ENCODE measurements at regions of chr19 and their contacts with region 1.

Region 1: DNA sequence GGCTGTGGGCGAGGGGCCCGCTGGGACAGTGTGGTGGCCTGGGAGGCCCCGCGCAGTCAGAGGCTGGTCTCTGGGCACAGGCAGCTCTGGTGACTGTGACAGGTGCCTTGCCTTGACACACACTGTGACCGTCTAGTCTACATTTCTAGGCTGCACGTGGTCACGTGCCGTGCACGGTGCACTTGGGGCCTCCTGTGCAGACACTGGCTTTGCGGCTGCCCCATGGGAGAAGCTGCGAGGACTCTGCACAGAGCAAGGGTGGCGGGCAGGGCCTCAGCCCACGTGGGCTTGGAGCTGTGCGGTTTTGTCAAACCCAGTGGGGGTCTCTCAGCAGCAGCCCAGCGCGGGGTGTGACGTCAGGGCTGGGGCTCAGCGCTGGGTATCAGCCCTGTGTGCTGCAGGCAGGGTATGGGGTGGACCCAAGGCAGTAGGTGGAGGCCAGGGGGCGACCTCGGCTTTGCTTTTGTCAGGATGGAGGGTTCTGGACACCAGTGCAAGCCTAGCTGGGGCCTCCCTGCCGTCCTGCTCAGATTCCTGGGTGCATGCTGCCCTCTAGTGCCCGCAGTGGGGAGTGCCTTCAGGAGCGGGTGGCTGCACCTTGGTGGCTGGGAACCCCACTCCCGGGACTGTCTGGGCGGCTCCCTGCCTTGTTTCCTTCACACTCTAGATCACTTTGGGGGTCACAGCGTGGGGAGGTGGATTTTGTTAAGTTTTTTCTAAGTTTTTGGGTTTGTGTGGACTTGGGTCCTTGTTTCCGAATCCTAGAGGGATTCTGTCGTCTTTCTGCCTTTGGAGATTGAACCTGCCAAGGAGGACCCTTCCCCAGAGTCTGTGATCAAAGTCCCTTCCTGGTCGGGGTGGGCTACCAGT is 62.6 kb downstream of the KDM4B start:
- DNase-seq: no peak
- H3K4me3 ChIP-seq: no peak overlapping the region
- H3K27ac ChIP-seq: peak overlapping the region; percentile 75
- H3K4me1 ChIP-seq: peaks cover 66% of the 10 kb centered on the region
- H3K27me3 ChIP-seq: no peaks in the 10 kb centered on the region
- CTCF ChIP-seq: peak; percentile 74 to 94 (median 91)
- POLR2A ChIP-seq: no peak

Region 2: DNA sequence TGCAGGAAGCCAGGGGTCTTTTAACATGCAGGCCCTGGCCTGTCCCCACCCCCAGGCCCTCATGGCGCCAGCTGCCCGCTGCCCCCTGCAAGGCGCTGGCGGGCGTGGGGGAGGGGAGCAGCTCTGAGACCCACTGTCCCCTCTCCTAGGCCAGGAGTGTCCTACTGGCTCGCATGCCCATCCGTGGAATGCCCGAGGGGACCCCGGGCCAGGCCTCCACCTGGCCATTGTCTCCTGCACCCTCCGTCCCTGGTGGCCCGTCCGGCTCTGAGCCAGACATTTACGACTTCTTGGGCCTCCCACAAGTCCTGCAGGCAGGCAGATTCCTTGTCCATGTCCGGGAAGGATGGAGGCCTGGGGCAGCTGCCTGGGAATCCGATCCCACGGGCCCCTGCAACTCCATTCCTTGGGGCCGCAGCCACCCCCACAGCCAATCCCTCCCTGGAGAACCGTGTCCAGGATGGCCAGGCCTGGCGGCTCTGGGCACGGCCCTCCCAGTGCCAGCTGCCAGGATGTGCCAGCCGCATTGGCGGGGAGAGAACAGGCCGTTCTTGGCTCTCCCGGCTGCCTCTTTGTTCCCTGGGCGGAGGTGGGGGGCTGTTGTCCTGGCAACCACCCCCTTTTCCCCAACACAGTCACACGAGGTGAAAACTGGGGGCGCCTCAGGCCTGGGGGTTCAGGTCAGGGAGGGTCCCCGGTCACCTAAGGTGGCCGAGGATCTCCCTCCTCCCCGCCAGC is 153.5 kb before region 1 on chr19:
- intact Hi-C with region 1: loop called (anchors 5 kb)
- DNase-seq: no peak
- H3K4me3 ChIP-seq: no peak overlapping the region
- H3K27ac ChIP-seq: no peak overlapping the region
- H3K4me1 ChIP-seq: peaks cover 12% of the 10 kb centered on the region
- H3K27me3 ChIP-seq: no peaks in the 10 kb centered on the region
- CTCF ChIP-seq: no peak
- POLR2A ChIP-seq: no peak

Region 3: GRCh38 chr19:4896372-4896771 is 135.1 kb before region 1 on chr19:
- intact Hi-C with region 1: no loop called
- DNase-seq: no peak
- H3K4me3 ChIP-seq: no peak overlapping the region
- H3K27ac ChIP-seq: no peak overlapping the region
- H3K4me1 ChIP-seq: no peaks in the 10 kb centered on the region
- H3K27me3 ChIP-seq: no peaks in the 10 kb centered on the region
- CTCF ChIP-seq: no peak
- POLR2A ChIP-seq: no peak

Region 4: DNA sequence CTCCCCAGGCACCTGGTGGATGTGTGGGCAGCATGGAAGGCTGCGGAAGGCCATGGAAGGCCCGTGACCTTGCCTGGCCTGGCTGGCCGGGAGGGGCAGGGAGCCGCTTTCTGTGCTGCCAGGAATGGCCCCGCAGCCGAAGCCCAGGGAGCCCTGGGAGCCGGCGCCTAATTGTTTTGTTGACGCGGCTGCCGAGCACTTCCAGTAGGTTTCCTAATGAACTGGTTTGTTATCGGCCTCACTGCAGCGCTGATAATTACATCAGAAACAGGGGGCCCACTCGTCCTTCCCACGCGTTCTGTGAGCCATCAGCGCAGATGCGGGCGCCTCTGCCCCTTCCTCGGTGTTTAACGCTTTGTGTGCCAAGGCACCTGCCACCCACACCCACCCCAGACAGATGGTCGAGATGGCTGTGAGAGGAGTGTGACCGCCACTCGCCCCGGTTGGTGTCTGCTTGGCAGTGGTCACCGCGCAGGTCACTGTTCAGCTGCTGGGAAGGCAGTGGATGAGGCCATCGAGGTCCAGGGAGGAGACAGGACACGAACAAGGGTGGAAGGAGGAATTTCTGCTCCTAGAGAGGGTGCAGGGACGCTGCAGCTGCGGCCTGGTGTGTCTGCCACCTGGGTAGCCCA is 61.9 kb after region 1 on chr19:
- intact Hi-C with region 1: no loop called
- DNase-seq: no peak
- H3K4me3 ChIP-seq: no peak overlapping the region
- H3K27ac ChIP-seq: peak overlapping the region; percentile 76
- H3K4me1 ChIP-seq: peaks cover 34% of the 10 kb centered on the region
- H3K27me3 ChIP-seq: no peaks in the 10 kb centered on the region
- CTCF ChIP-seq: no peak
- POLR2A ChIP-seq: no peak

Measured in vagina (tissue), 2 donors.